PC-3 (cell line): ENCODE measurements at regions of chr12 and their contacts with region 1.

Region 1: GRCh38 chr12:111396726-111397445 is 8.8 kb upstream of the SH2B3 start:
- DNase-seq: peak; percentile 89
- ATAC-seq: peak; percentile 81
- H3K4me3 ChIP-seq: peak overlapping the region; percentile 38; the same call in 1 of the 2 replicates
- H3K27ac ChIP-seq: peak overlapping the region; percentile 65
- H3K4me1 ChIP-seq: peaks cover 23% of the 10 kb centered on the region
- H3K27me3 ChIP-seq: no peaks in the 10 kb centered on the region
- CTCF ChIP-seq: peak; percentile 99

Region 2: GRCh38 chr12:111330800-111331752 is 65.8 kb before region 1 on chr12:
- CTCF ChIA-PET with region 1: interaction called, 4 read pairs
- POLR2A ChIA-PET with region 1: no interaction called
- intact Hi-C with region 1: loop called (anchors 2 kb)
- DNase-seq: peak; percentile 83
- ATAC-seq: peak; percentile 78
- H3K4me3 ChIP-seq: no peak overlapping the region
- H3K27ac ChIP-seq: no peak overlapping the region
- H3K4me1 ChIP-seq: no peaks in the 10 kb centered on the region
- H3K27me3 ChIP-seq: no peaks in the 10 kb centered on the region; the same call in 1 of the 2 replicates
- CTCF ChIP-seq: peak; percentile 78

Region 3: DNA sequence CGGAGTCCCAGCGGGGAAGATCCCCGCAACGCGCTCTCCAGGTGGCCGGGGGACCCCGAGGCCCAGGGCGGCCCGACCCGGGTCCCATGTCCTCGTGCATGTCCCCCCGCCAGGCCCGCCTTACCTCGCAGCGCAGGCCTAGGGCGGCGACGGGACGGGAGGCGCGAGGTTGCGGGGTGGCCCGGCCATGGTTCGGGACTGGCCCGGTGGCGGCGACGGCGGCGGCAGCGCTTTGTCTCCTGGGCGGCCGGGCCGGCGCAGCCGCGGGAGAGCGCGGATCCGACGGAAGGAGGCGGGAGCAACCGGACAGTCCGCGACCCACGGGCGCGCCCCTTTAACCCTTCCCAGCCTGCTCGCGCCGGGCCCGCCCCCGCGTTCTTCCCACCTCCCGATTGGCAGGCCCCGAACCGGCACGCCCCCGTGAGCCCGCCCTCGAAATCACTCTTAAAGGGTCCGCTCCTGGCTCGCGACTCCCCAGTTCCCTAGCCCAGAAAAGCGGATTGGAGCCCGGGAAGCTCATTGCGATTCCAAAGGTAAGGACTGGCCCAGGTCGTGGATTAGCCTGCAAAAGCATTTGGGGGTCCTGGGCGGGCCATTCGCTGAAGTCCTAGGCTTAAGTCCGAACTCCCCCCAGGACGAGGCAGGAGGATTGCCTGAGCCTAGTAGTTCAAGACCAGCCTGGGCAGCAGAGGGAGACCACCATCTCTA is 27.9 kb before region 1 on chr12 and contains the start of gene PHETA1:
- CTCF ChIA-PET with region 1: no interaction called
- POLR2A ChIA-PET with region 1: interaction called, 17 read pairs
- intact Hi-C with region 1: no loop called
- DNase-seq: peak; percentile 88
- ATAC-seq: peak; percentile 95
- H3K4me3 ChIP-seq: peak within 1 kb of the TSS; percentile 81
- H3K27ac ChIP-seq: no peak within 1 kb of the TSS
- H3K4me1 ChIP-seq: peaks cover 12% of the 10 kb centered on the region
- H3K27me3 ChIP-seq: no peaks in the 10 kb centered on the region
- CTCF ChIP-seq: no peak
- total RNA-seq, gene PHETA1: 18.6 and 22.8 TPM in 2 replicates

Region 4: DNA sequence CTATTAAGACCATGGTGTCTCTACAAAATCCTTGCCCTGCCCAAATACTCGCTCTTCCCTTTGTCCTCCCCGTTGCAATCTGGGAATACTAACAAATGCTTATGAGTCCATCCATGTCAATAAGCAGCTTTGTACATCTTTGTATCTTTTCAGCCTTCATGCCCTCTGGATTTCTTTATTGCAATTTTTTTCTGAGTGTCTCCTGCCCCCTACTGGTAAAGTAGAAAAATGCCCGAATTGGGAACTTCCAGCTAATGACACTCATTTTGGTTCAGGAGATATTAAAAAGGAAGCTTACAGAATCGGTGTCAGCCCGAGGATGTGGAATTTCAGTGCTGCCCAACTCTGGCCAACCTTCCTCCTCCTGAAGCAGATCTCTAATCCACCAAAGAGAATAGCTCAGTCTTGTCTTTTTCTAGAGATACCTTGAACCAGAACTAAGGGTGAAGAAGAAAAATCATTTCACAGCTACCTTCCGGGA is 54.8 kb after region 1 on chr12:
- CTCF ChIA-PET with region 1: interaction called, 43 read pairs
- POLR2A ChIA-PET with region 1: no interaction called
- intact Hi-C with region 1: loop called (anchors 1 kb)
- DNase-seq: peak; percentile 72
- ATAC-seq: peak; percentile 47
- H3K4me3 ChIP-seq: no peak overlapping the region
- H3K27ac ChIP-seq: no peak overlapping the region
- H3K4me1 ChIP-seq: no peaks in the 10 kb centered on the region
- H3K27me3 ChIP-seq: no peaks in the 10 kb centered on the region
- CTCF ChIP-seq: peak; percentile 97

Region 5: DNA sequence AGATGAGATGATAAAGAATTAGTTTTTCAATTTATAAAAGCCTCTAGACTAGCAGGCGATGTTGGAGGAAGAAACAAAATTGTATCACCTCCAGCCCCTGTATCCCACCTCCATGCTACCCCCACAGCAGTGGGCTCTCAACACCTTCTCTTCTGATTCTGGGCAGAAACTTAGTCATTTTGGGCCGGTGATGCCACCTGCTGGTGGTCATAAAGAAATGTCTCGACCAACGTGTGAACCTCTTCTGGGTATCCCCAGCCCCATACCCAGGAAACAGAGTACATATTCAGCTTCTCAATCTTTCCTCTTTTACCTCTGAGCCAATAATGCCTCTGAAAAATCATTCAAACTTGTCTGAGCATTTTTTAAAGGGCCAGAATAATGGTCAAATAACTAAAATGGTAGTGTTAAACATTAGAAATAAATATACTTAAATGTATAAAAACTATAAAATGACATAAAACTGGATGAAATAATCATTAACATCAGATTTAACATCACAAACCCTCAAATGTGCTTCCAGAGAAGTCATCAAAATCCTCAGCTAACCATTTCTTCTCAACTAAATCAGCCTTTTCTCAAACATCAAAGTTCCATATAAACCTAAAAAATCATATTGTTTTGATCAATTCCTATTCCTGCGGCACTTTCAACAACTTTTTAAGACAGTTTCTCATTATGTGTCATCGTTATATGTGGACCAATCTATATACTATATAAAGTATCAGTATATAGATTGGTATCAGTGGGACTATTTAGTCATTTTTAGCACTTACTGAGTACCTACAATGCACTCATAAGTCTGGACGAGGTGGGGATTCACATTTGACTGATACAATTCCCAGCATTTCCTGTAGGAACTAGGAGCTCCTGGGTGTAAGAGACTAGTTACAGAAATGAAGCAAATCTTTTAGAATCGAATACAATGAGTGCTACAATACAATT is 132.8 kb after region 1 on chr12:
- CTCF ChIA-PET with region 1: interaction called, 4 read pairs
- POLR2A ChIA-PET with region 1: no interaction called
- intact Hi-C with region 1: loop called (anchors 2 kb)
- DNase-seq: peak; percentile 71
- ATAC-seq: peak; percentile 67
- H3K4me3 ChIP-seq: no peak overlapping the region
- H3K27ac ChIP-seq: no peak overlapping the region
- H3K4me1 ChIP-seq: no peaks in the 10 kb centered on the region
- H3K27me3 ChIP-seq: no peaks in the 10 kb centered on the region
- CTCF ChIP-seq: peak; percentile 92

Region 6: DNA sequence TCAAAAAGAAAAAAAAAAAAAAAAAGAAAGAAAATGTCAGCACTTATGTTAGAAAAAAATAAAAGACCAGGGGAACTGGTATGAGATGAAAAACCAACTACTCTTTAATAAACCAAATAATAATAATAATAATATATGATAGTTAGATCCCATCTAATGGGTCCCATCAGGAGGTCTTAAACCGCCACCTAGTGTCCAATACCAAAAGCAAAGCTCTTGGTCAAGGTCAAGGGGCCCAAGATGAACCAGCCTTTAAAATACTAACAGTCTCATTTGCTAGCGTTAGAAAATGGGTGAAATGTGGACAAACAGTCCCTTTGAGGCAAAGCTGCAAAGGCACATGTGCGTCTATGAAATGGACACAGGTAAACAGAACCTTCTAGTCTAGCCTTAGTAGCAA is 276.6 kb after region 1 on chr12:
- CTCF ChIA-PET with region 1: no interaction called
- POLR2A ChIA-PET with region 1: no interaction called
- intact Hi-C with region 1: loop called (anchors 10 kb)
- DNase-seq: peak; percentile 55
- ATAC-seq: peak; percentile 55
- H3K4me3 ChIP-seq: no peak overlapping the region
- H3K27ac ChIP-seq: no peak overlapping the region
- H3K4me1 ChIP-seq: no peaks in the 10 kb centered on the region
- H3K27me3 ChIP-seq: no peaks in the 10 kb centered on the region
- CTCF ChIP-seq: peak; percentile 61